CD4-positive, alpha-beta T cell (primary cell): ENCODE measurements at regions of chr6 and their contacts with region 1.

Region 1: GRCh38 chr6:26270903-26271667 is 93.9 kb upstream of the BTN3A2 start:
- DNase-seq: peak; percentile 60 to 92 (median 75)
- ATAC-seq: peak; percentile 25
- H3K4me3 ChIP-seq: peak overlapping the region; percentile 59
- H3K4me3 Mint-ChIP-seq: no peak overlapping the region
- H3K27ac ChIP-seq: peak overlapping the region; percentile 82 to 84
- H3K27ac Mint-ChIP-seq: no peak overlapping the region
- H3K4me1 ChIP-seq: peaks cover 28% of the 10 kb centered on the region
- H3K4me1 Mint-ChIP-seq: peaks cover 7% of the 10 kb centered on the region
- H3K27me3 ChIP-seq: no peaks in the 10 kb centered on the region
- H3K27me3 Mint-ChIP-seq: no peaks in the 10 kb centered on the region
- CTCF ChIP-seq: no peak

Region 2: GRCh38 chr6:26103770-26104456 is 167.2 kb before region 1 on chr6:
- CTCF ChIA-PET with region 1: interaction called, 3 read pairs
- POLR2A ChIA-PET with region 1: interaction called, 27 read pairs
- intact Hi-C with region 1: no loop called
- DNase-seq: peak; percentile 84 to 96 (median 90)
- ATAC-seq: peak; percentile 88
- H3K4me3 ChIP-seq: peak overlapping the region; percentile 58
- H3K4me3 Mint-ChIP-seq: peak overlapping the region; percentile 94
- H3K27ac ChIP-seq: peak overlapping the region; percentile 83 to 85
- H3K27ac Mint-ChIP-seq: peak overlapping the region; percentile 99
- H3K4me1 ChIP-seq: peaks cover 16% of the 10 kb centered on the region
- H3K4me1 Mint-ChIP-seq: peaks cover 13% of the 10 kb centered on the region
- H3K27me3 ChIP-seq: no peaks in the 10 kb centered on the region
- H3K27me3 Mint-ChIP-seq: peaks cover 5% of the 10 kb centered on the region
- CTCF ChIP-seq: peak; percentile 58

Region 3: DNA sequence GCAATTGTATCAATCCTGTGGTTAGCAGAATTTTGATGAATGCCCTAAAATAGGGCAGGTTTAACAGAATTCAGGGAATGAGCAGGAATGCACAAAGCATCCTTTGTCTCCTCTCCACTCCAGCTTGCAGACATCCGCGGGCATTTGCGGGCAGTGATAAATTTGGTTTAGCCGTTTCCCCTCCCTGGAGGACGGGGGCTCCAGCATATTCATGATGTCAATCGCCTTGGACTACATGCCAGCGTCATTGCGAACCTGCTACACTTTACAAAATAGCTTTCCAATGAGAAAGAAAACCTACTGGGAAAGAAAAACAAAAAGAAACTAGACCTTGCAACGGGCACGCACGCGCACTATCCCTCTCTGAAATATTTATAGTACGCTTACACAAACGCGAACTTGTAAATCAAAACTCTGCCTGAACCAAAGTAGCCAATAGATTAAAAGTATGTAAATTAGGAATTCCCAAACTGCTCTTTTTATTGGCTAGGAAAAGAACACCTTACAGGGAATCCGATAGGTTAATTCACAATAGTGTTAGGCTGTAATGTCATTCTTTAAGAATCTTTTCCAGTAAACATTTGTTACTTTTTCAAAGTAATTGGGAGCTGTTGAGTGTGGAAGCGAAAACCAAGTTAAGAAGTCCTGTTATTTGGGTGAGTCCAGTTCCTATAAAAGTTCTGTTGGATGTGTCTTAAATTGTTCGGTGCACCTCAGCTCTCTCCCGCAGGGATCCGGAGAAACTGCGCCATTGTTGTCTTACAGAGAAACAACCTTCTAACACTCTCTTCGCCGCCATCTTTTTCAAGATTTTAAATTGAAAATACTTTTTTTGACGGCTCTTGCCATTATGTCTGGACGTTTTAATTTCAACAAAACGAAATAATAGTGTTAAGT is 47.2 kb before region 1 on chr6:
- CTCF ChIA-PET with region 1: interaction called, 5 read pairs
- POLR2A ChIA-PET with region 1: interaction called, 101 read pairs
- intact Hi-C with region 1: loop called (anchors 5 kb)
- DNase-seq: peak in 13 of 14 experiments; percentile 45 to 93 (median 60)
- ATAC-seq: peak; percentile 87
- H3K4me3 ChIP-seq: peak overlapping the region; percentile 68
- H3K4me3 Mint-ChIP-seq: no peak overlapping the region
- H3K27ac ChIP-seq: peak overlapping the region; percentile 72 to 82
- H3K27ac Mint-ChIP-seq: no peak overlapping the region
- H3K4me1 ChIP-seq: peaks cover 18% of the 10 kb centered on the region
- H3K4me1 Mint-ChIP-seq: peaks cover 5% of the 10 kb centered on the region
- H3K27me3 ChIP-seq: no peaks in the 10 kb centered on the region
- H3K27me3 Mint-ChIP-seq: no peaks in the 10 kb centered on the region
- CTCF ChIP-seq: no peak

Region 4: DNA sequence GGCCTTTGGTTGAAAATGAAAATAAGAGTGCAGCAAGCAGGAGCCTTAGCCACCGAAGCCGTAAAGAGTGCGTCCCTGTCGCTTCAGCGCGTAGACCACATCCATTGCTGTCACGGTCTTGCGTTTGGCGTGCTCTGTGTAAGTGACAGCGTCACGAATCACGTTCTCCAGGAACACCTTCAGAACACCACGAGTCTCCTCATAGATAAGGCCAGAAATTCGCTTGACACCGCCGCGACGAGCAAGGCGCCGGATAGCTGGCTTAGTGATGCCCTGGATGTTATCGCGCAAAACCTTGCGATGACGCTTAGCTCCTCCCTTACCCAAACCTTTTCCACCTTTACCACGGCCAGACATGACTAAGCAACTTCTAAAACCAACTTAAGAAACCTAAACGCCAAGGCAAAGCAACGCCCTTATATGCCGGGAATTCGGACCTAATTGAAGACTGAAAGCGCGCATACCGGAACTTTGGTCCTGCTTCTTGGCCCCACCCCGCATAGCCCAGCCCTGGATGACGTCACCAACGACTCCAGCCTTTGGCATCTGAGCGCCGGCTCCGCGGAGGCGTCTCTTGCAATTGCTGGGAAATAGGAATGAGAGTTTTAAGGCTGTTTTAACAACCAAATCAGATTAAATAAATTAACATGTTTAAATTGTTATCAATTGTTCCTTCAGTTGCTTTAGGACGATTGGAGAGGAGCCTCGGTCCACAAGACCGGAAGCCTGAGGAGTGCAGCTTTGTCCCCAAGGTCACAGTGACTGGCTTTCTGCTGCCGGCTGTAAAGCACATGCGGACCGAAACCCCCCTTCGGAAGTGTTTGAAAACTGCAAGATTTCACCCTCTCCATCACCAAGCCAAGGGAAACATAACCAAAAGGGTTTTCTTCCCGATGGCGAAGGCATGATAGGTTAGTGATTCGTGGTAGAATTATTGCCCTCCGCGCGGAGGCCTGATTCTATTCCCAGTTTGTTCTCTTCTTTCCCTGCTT is 14.4 kb after region 1 on chr6:
- CTCF ChIA-PET with region 1: interaction called, 27 read pairs
- POLR2A ChIA-PET with region 1: interaction called, 417 read pairs
- intact Hi-C with region 1: loop called (anchors 1 kb)
- DNase-seq: peak; percentile 85 to 99 (median 92)
- ATAC-seq: peak; percentile 82
- H3K4me3 ChIP-seq: peak overlapping the region; percentile 62
- H3K4me3 Mint-ChIP-seq: peak overlapping the region; percentile 87
- H3K27ac ChIP-seq: peak overlapping the region; percentile 82 to 85
- H3K27ac Mint-ChIP-seq: peak overlapping the region; percentile 96
- H3K4me1 ChIP-seq: peaks cover 16% of the 10 kb centered on the region
- H3K4me1 Mint-ChIP-seq: peaks cover 24% of the 10 kb centered on the region
- H3K27me3 ChIP-seq: no peaks in the 10 kb centered on the region
- H3K27me3 Mint-ChIP-seq: peaks cover 11% of the 10 kb centered on the region
- CTCF ChIP-seq: no peak

Region 5: GRCh38 chr6:26473758-26474438 is 202.8 kb after region 1 on chr6:
- CTCF ChIA-PET with region 1: no interaction called
- POLR2A ChIA-PET with region 1: interaction called, 14 read pairs
- intact Hi-C with region 1: no loop called
- DNase-seq: peak; percentile 60 to 96 (median 76)
- ATAC-seq: peak; percentile 91
- H3K4me3 ChIP-seq: peak overlapping the region; percentile 56
- H3K4me3 Mint-ChIP-seq: peak overlapping the region; percentile 94
- H3K27ac ChIP-seq: peak overlapping the region; percentile 85 to 90
- H3K27ac Mint-ChIP-seq: peak overlapping the region; percentile 99
- H3K4me1 ChIP-seq: peaks cover 45% of the 10 kb centered on the region
- H3K4me1 Mint-ChIP-seq: peaks cover 64% of the 10 kb centered on the region
- H3K27me3 ChIP-seq: no peaks in the 10 kb centered on the region
- H3K27me3 Mint-ChIP-seq: no peaks in the 10 kb centered on the region
- CTCF ChIP-seq: no peak

Region 6: GRCh38 chr6:27809939-27810767 is 1539.1 kb after region 1 on chr6:
- CTCF ChIA-PET with region 1: no interaction called
- POLR2A ChIA-PET with region 1: interaction called, 38 read pairs
- intact Hi-C with region 1: no loop called
- DNase-seq: peak; percentile 63 to 98 (median 75)
- ATAC-seq: peak; percentile 61
- H3K4me3 ChIP-seq: peak overlapping the region; percentile 64
- H3K4me3 Mint-ChIP-seq: peak overlapping the region; percentile 95
- H3K27ac ChIP-seq: peak overlapping the region; percentile 69 to 81
- H3K27ac Mint-ChIP-seq: peak overlapping the region; percentile 96
- H3K4me1 ChIP-seq: peaks cover 39% of the 10 kb centered on the region
- H3K4me1 Mint-ChIP-seq: peaks cover 68% of the 10 kb centered on the region
- H3K27me3 ChIP-seq: no peaks in the 10 kb centered on the region
- H3K27me3 Mint-ChIP-seq: no peaks in the 10 kb centered on the region
- CTCF ChIP-seq: no peak